ENCODE measurements at regions of chr4 and their contacts with region 1.

Region 1: GRCh38 chr4:81069706-81070331 is 39.3 kb downstream of the BMP3 start:
- DNase-seq: peak; percentile 78
- ATAC-seq: peak; percentile 89
- H3K4me3 ChIP-seq: no peak overlapping the region
- H3K27ac ChIP-seq: no peak overlapping the region
- H3K4me1 ChIP-seq: no peaks in the 10 kb centered on the region
- H3K27me3 ChIP-seq: no peaks in the 10 kb centered on the region
- CTCF ChIP-seq: peak; percentile 84

Region 2: DNA sequence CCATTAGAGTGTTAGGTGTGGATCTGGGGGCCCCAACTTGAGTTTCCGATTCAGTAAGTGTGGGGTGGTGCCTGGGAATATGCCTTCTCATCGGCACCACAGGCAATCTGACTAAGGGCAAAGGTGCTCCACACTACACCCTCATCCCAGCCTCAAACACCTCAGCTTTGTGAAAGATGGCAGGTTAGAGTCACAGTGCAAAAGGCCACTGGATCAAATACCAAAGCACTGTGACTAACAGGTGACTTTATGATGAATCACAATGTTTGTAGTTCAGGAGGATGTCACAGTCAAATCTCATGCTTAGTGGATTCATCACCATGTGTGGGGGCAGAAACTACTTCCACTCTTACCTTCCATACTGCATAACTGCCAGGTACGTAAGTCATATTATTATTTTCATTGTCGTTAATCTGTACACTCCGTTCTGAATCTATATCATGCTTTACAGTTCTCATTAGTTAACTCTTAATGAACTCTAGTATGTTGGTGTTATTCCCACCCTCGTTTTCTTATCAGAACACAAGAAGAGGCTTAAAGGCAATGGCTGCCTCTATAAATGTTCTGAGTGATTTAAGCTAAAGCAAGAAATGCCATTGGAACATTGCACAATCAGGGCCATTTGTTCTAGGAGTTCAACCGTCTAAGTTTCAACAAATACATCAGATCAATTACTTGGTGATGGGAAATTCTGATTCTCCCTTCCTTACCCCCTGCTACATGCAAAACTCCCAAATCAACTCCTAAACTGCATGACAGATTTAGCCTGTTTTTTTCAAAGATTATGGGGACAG is 95.0 kb after region 1 on chr4:
- CTCF ChIA-PET with region 1: no interaction called
- POLR2A ChIA-PET with region 1: no interaction called
- in situ Hi-C with region 1: no loop called
- intact Hi-C with region 1: no loop called
- DNase-seq: peak; percentile 90
- ATAC-seq: peak; percentile 96
- H3K4me3 ChIP-seq: peak overlapping the region in 1 of 2 experiments; percentile 3; a peak in 1 of 4 replicates
- H3K27ac ChIP-seq: no peak overlapping the region
- H3K4me1 ChIP-seq: no peaks in the 10 kb centered on the region
- H3K27me3 ChIP-seq: no peaks in the 10 kb centered on the region
- CTCF ChIP-seq: no peak

Region 3: GRCh38 chr4:81351654-81352445 is 282.0 kb after region 1 on chr4:
- CTCF ChIA-PET with region 1: interaction called, 12 read pairs
- POLR2A ChIA-PET with region 1: no interaction called
- in situ Hi-C with region 1: no loop called
- intact Hi-C with region 1: loop called (anchors 1 kb)
- DNase-seq: peak; percentile 43
- ATAC-seq: peak; percentile 80
- H3K4me3 ChIP-seq: no peak overlapping the region
- H3K27ac ChIP-seq: no peak overlapping the region
- H3K4me1 ChIP-seq: no peaks in the 10 kb centered on the region
- H3K27me3 ChIP-seq: no peaks in the 10 kb centered on the region
- CTCF ChIP-seq: peak; percentile 84